ENCODE measurements at regions of chr1 and their contacts with region 1.

Region 1: DNA sequence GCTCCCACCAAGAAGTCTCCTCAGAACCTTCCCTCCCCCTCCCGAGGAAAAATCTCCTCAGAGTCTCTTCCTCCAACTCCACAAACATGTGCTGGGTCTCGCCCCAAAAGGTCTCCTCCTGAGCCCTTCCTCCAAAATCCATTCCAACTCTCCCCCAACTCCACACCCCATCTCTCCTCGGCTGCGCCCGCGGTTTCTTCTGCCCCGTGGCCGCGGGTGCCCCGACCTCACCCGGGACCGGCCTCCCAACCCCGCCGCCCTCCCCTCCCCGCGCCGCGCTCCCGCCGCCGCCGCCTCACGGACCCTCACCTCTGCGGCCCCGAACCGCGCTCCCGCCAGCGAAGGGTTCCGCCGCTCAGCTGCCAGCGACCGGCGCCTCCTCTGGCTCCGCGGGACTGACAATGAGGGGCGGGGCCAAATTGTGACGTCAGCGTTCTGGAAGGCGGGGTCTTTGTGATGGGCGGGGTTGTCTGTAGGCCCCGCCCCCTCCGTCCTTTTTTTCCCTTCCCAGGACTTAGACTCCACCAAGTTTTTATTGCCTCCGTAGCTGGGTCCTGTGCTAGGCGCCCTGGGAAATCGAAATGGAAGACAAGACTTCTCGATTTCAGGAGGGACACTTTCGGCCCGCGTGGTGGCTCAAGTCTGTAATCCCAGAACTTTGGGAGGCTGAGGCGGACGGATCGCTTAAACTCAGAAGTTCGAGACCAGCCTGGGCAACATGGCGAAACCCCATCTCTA is at the start of gene LUZP1:
- DNase-seq: peak; percentile 80 to 95 (median 83)
- ATAC-seq: peak; percentile 90
- H3K4me3 ChIP-seq: peak within 1 kb of the TSS; percentile 87
- H3K4me3 Mint-ChIP-seq: peak within 1 kb of the TSS; percentile 97
- H3K27ac ChIP-seq: peak within 1 kb of the TSS; percentile 68 to 74
- H3K27ac Mint-ChIP-seq: peak within 1 kb of the TSS; percentile 79
- H3K4me1 ChIP-seq: peaks cover 25% of the 10 kb centered on the region
- H3K4me1 Mint-ChIP-seq: peaks cover 46% of the 10 kb centered on the region
- H3K27me3 ChIP-seq: no peaks in the 10 kb centered on the region
- H3K27me3 Mint-ChIP-seq: no peaks in the 10 kb centered on the region
- CTCF ChIP-seq: no peak
- total RNA-seq, gene LUZP1: 20.1 to 23.7 TPM

Region 2: DNA sequence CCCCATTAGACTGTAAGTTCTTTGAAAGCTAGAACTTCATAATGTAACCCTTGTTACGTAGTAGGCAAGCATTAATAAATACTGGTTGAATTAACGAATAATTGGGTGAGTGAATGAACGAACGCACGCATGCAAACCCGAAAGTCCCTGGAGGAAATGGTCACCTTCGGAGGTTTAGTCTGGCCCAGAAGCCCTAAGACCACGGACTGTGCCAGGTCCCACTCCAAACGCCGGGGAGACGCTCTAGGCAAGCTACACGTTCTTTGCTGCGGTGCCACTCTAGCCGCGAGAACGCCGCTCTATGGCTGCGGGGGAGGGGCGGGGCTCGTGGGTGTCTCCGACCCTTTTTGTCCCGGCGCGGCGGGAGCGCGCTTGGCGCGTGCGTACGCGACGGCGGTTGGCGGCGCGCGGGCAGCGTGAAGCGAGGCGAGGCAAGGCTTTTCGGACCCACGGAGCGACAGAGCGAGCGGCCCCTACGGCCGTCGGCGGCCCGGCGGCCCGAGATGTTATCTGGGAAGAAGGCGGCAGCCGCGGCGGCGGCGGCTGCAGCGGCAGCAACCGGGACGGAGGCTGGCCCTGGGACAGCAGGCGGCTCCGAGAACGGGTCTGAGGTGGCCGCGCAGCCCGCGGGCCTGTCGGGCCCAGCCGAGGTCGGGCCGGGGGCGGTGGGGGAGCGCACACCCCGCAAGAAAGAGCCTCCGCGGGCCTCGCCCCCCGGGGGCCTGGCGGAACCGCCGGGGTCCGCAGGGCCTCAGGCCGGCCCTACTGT is 149.3 kb before region 1 on chr1 and contains the start of gene KDM1A:
- CTCF ChIA-PET with region 1: no interaction called
- POLR2A ChIA-PET with region 1: no interaction called
- intact Hi-C with region 1: loop called in 1 of 2 experiments (anchors 2 kb)
- DNase-seq: peak; percentile 92 to 97 (median 95)
- ATAC-seq: peak; percentile 97
- H3K4me3 ChIP-seq: peak within 1 kb of the TSS; percentile 86
- H3K4me3 Mint-ChIP-seq: peak within 1 kb of the TSS; percentile 99
- H3K27ac ChIP-seq: peak within 1 kb of the TSS; percentile 41 to 53
- H3K27ac Mint-ChIP-seq: peak within 1 kb of the TSS; percentile 88
- H3K4me1 ChIP-seq: peaks cover 27% of the 10 kb centered on the region
- H3K4me1 Mint-ChIP-seq: peaks cover 51% of the 10 kb centered on the region
- H3K27me3 ChIP-seq: no peaks in the 10 kb centered on the region
- H3K27me3 Mint-ChIP-seq: no peaks in the 10 kb centered on the region
- CTCF ChIP-seq: peak; percentile 25
- total RNA-seq, gene KDM1A: 38.3 to 42.4 TPM

Region 3: DNA sequence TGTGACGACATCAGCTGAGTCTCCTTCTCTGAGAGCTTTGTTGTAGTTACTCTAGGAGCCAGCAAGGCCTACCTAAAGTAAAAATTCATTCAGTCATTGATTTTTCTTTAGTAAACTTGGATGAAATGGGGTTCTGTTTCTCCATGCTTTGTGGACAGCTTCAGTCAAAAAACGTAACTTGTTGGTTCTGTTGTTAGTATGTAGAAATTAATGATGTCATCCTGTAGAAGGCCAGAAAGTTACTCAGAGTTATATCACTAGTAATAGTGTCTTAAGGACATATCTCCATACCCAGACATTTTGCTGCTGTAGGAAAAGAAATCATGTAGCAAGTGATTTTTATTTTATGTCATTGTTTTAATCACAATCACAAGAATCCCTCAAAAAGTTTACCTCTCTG is 106.4 kb before region 1 on chr1:
- CTCF ChIA-PET with region 1: no interaction called
- POLR2A ChIA-PET with region 1: no interaction called
- intact Hi-C with region 1: no loop called
- DNase-seq: no peak
- ATAC-seq: no peak
- H3K4me3 ChIP-seq: no peak overlapping the region
- H3K4me3 Mint-ChIP-seq: no peak overlapping the region
- H3K27ac ChIP-seq: no peak overlapping the region
- H3K27ac Mint-ChIP-seq: no peak overlapping the region
- H3K4me1 ChIP-seq: no peaks in the 10 kb centered on the region
- H3K4me1 Mint-ChIP-seq: no peaks in the 10 kb centered on the region
- H3K27me3 ChIP-seq: no peaks in the 10 kb centered on the region
- H3K27me3 Mint-ChIP-seq: no peaks in the 10 kb centered on the region
- CTCF ChIP-seq: no peak

Region 4: DNA sequence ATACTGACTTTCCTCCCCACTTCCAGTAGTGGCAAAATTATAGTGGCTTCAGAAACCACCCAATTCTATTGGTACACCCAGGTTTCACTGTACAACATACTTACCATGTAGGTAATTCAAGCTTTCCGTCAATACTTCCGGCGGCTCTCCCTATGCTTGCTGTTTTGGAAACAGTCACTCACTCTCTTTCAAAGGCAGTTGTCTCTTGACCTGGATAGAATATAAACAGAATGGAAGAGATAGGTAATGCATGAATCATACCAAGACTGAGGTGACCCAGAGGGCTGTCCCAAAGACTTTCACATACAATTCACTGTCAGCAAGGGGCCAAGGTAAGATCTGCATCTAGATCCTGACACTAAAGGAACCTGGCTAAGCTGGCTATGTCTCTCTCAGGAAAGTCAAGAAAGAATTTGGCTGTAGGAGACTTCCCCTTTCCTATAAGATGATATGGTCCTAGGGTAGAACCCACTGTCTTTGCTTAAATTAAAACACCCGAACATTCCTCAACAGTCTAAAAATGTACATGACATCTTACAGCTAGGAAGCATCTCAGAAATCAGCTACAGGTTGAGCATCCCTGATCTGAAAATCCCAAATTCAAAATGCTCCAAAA is 59.6 kb before region 1 on chr1:
- CTCF ChIA-PET with region 1: interaction called, 8 read pairs
- POLR2A ChIA-PET with region 1: interaction called, 12 read pairs
- intact Hi-C with region 1: no loop called
- DNase-seq: peak in 2 of 14 experiments; percentile 19 to 37
- ATAC-seq: no peak
- H3K4me3 ChIP-seq: no peak overlapping the region
- H3K4me3 Mint-ChIP-seq: no peak overlapping the region
- H3K27ac ChIP-seq: peak overlapping the region in 1 of 2 donors; percentile 8
- H3K27ac Mint-ChIP-seq: peak overlapping the region; percentile 32
- H3K4me1 ChIP-seq: peaks cover 31% of the 10 kb centered on the region
- H3K4me1 Mint-ChIP-seq: peaks cover 37% of the 10 kb centered on the region
- H3K27me3 ChIP-seq: no peaks in the 10 kb centered on the region
- H3K27me3 Mint-ChIP-seq: no peaks in the 10 kb centered on the region
- CTCF ChIP-seq: no peak

Region 5: GRCh38 chr1:23122023-23122748 is 46.4 kb before region 1 on chr1:
- CTCF ChIA-PET with region 1: interaction called, 4 read pairs
- POLR2A ChIA-PET with region 1: interaction called, 10 read pairs
- intact Hi-C with region 1: loop called in 1 of 2 experiments (anchors 5 kb)
- DNase-seq: no peak
- ATAC-seq: no peak
- H3K4me3 ChIP-seq: no peak overlapping the region
- H3K4me3 Mint-ChIP-seq: no peak overlapping the region
- H3K27ac ChIP-seq: no peak overlapping the region
- H3K27ac Mint-ChIP-seq: no peak overlapping the region
- H3K4me1 ChIP-seq: peaks cover 40% of the 10 kb centered on the region
- H3K4me1 Mint-ChIP-seq: peaks cover 75% of the 10 kb centered on the region
- H3K27me3 ChIP-seq: no peaks in the 10 kb centered on the region
- H3K27me3 Mint-ChIP-seq: no peaks in the 10 kb centered on the region
- CTCF ChIP-seq: no peak